ENCODE measurements at regions of chr17 and their contacts with region 1.

Region 1: GRCh38 chr17:43576563-43577229 is 30.6 kb upstream of the ETV4 start:
- DNase-seq: peak; percentile 80

Region 2: GRCh38 chr17:43615330-43616028 is 38.8 kb after region 1 on chr17:
- CTCF ChIA-PET with region 1: no interaction called
- POLR2A ChIA-PET with region 1: no interaction called
- DNase-seq: no peak

Region 3: GRCh38 chr17:43673516-43674323 is 97.0 kb after region 1 on chr17:
- CTCF ChIA-PET with region 1: no interaction called
- POLR2A ChIA-PET with region 1: interaction called, 19 read pairs
- DNase-seq: peak; percentile 67